Mammary epithelial cell (primary cell): ENCODE measurements at regions of chr4 and their contacts with region 1.

Region 1: DNA sequence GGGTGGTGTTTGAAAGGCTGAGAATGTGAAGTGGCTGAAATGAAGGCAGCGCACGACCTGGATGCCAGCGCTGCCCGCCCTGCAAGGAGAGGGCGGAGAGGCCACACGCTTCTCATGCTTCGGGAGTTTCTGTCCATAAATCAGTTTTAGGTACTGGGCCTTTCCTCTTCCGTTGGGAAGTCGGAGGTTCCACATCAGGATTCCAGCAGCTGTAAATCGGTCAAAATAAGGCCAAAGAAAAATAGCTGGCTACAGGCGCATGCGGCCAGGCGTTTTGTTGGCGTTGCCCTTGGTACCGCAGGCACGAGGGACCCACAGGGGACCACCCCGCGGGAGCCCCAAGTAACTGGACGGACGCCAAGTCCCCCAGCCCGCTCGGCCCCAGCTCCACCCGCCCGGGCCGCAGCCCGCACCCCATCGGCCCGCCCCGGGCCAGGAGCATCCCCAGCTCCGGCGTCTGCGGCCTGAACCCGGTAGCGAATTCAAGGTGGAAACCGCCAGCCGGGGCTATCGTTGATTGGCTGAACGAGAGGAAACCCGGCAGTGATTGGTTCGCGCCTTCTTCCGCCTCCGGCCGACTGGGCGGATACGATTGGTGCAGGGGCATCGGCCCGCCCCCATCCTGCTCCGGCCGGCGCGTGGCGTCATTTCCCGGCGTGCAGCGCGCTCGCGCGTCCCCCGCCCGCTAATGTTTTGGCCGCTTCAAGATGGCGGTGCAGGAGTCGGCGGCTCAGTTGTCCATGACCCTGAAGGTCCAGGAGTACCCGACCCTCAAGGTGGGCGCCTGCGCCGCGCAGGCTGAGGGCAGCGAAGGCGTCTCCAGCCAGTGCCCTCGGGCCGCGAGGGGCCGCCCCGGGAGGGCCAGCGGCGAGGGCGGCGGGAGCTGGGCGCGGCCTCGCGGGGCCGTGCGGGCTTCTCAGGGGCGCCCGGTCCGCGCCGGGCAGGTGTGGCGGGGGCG is at the start of gene MAEA:
- DNase-seq: peak; percentile 96
- H3K4me3 ChIP-seq: peak within 1 kb of the TSS; percentile 77 to 94 (median 79)
- H3K27ac ChIP-seq: peak within 1 kb of the TSS; percentile 80
- H3K4me1 ChIP-seq: peaks cover 26% of the 10 kb centered on the region
- H3K27me3 ChIP-seq: no peaks in the 10 kb centered on the region
- CTCF ChIP-seq: no peak
- total RNA-seq, gene MAEA: 80.4 to 109 TPM

Region 2: DNA sequence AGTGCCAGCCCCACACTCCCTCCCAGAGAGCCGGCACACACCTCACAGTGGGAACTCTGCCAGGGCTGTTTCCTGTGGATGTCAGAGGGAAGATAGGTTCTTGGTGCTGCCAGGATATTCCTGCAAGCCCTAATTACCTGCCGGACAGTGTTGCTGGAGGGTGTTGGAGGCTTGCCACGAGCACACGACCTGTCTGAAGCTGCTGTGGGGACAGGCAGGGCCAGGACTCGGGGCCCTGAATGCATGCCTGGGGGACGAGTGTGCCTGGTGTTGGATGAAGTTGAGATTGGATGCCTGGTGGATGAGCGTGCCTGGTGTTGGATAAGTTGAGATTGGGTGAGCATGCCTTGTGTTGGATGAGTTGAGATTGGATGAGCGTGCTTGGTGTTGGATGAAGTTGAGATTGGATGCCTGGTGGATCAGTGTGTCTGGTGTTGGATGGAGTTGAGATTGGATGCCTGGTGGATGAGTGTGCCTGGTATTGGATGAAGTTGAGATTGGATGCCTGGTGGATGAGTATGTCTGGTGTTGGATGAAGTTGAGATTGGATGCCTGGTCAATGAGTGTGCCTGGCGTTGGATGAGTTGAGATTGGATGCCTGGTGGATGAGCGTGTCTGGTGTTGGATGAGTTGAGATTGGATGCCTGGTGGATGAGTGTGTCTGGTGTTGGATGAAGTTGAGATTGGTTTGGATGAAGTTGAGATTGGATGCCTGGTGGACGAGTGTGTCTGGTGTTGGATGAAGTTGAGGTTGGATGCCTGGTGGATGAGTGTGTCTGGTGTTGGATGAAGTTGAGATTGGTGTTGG is 34.4 kb after region 1 on chr4:
- CTCF ChIA-PET with region 1: no interaction called
- dilution Hi-C with region 1: no loop called
- in situ Hi-C with region 1: no loop called
- intact Hi-C with region 1: loop called (anchors 1 kb)
- DNase-seq: peak; percentile 98
- H3K4me3 ChIP-seq: no peak overlapping the region
- H3K27ac ChIP-seq: peak overlapping the region; percentile 46
- H3K4me1 ChIP-seq: peaks cover 45% of the 10 kb centered on the region
- H3K27me3 ChIP-seq: no peaks in the 10 kb centered on the region
- CTCF ChIP-seq: no peak

Region 3: GRCh38 chr4:1329408-1330371 is 40.2 kb after region 1 on chr4:
- CTCF ChIA-PET with region 1: no interaction called
- dilution Hi-C with region 1: no loop called
- in situ Hi-C with region 1: loop called in 1 of 2 experiments (anchors 5 kb)
- intact Hi-C with region 1: loop called (anchors 1 kb)
- DNase-seq: peak; percentile 94
- H3K4me3 ChIP-seq: no peak overlapping the region
- H3K27ac ChIP-seq: peak overlapping the region; percentile 69
- H3K4me1 ChIP-seq: peaks cover 40% of the 10 kb centered on the region
- H3K27me3 ChIP-seq: no peaks in the 10 kb centered on the region
- CTCF ChIP-seq: no peak